ENCODE measurements at regions of chr10 and their contacts with region 1.

Region 1: GRCh38 chr10:97792141-97792721 is 20.4 kb upstream of the SFRP5 start:
- DNase-seq: peak; percentile 84
- H3K4me3 ChIP-seq: peak overlapping the region in 1 of 2 experiments; percentile 3; a peak in 1 of 4 replicates
- H3K27ac ChIP-seq: no peak overlapping the region
- H3K4me1 ChIP-seq: peaks cover 0 to 29% of the 10 kb centered on the region in 2 experiments; a peak in 1 of 4 replicates
- H3K27me3 ChIP-seq: no peaks in the 10 kb centered on the region
- CTCF ChIP-seq: peak; percentile 91
- EP300 ChIP-seq: no peak
- RAD21 ChIP-seq: peak; percentile 82

Region 2: DNA sequence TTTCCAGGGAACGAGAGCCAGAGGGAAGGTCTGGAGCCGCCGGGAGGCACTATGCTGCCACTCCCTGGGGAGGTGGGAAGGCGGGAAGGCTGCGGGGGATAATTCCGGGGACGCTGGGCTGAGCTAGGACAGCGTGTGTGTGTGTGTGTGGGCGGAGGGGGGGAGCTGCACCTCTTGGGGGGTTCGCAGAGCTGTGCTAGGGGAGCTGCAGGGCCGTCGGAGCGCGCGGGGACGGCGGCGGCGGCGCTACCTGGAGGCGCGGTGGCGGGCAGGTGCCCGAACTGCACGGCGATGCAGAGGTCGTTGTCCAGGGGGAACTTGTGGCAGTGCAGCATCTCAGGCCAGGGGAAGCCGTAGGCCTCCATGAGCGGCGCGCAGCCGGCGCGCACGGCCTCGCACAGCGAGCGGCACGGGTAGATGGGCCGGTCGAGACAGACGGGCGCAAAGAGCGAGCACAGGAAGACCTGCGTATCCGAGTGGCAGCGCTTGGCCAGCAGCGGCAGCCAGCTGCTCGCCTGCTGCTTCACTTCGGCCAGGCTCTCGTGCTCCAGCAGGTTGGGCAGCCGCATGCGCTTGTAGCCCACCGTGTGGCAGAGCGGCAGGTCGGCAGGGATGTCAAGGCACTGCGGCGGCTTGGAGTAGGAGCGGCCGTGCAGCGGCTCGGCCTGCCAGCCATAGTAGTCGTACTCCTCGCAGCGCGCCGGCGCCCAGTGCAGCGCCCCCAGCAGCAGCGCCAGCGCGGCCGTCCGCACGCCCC is 21.0 kb before region 1 on chr10:
- CTCF ChIA-PET with region 1: interaction called, 37 read pairs
- POLR2A ChIA-PET with region 1: no interaction called
- DNase-seq: peak; percentile 84
- H3K4me3 ChIP-seq: peak overlapping the region in 1 of 2 experiments; percentile 35; a peak in 2 of 4 replicates
- H3K27ac ChIP-seq: no peak overlapping the region
- H3K4me1 ChIP-seq: peaks cover 0 to 4% of the 10 kb centered on the region in 2 experiments; a peak in 1 of 4 replicates
- H3K27me3 ChIP-seq: peaks cover 21% of the 10 kb centered on the region; the same call in 1 of the 2 replicates
- CTCF ChIP-seq: no peak
- EP300 ChIP-seq: no peak
- RAD21 ChIP-seq: no peak

Region 3: GRCh38 chr10:97810446-97810845 is 18.2 kb after region 1 on chr10:
- CTCF ChIA-PET with region 1: interaction called, 31 read pairs
- POLR2A ChIA-PET with region 1: no interaction called
- DNase-seq: no peak
- H3K4me3 ChIP-seq: no peak overlapping the region
- H3K27ac ChIP-seq: no peak overlapping the region
- H3K4me1 ChIP-seq: no peaks in the 10 kb centered on the region
- H3K27me3 ChIP-seq: peaks cover 13% of the 10 kb centered on the region; the same call in 1 of the 2 replicates
- CTCF ChIP-seq: no peak
- EP300 ChIP-seq: no peak
- RAD21 ChIP-seq: no peak

Region 4: GRCh38 chr10:97849687-97850402 is 57.6 kb after region 1 on chr10 and contains the start of gene GOLGA7B:
- CTCF ChIA-PET with region 1: interaction called, 13 read pairs
- POLR2A ChIA-PET with region 1: interaction called, 5 read pairs
- DNase-seq: peak; percentile 92
- H3K4me3 ChIP-seq: peak within 1 kb of the TSS; percentile 23 to 37; a peak in 2 of 4 replicates
- H3K27ac ChIP-seq: peak within 1 kb of the TSS in 1 of 2 experiments; percentile 29; a peak in 1 of 4 replicates
- H3K4me1 ChIP-seq: peaks cover 0 to 17% of the 10 kb centered on the region in 2 experiments; a peak in 1 of 4 replicates
- H3K27me3 ChIP-seq: peaks cover 32% of the 10 kb centered on the region
- CTCF ChIP-seq: no peak
- EP300 ChIP-seq: no peak
- RAD21 ChIP-seq: no peak
- polyA plus RNA-seq, gene GOLGA7B: 0.03 and 0.13 TPM in 2 replicates

Region 5: GRCh38 chr10:97875391-97875790 is 83.2 kb after region 1 on chr10:
- CTCF ChIA-PET with region 1: interaction called, 277 read pairs
- POLR2A ChIA-PET with region 1: no interaction called
- DNase-seq: no peak
- H3K4me3 ChIP-seq: no peak overlapping the region
- H3K27ac ChIP-seq: no peak overlapping the region
- H3K4me1 ChIP-seq: peaks cover 0 to 11% of the 10 kb centered on the region in 2 experiments; a peak in 1 of 4 replicates
- H3K27me3 ChIP-seq: peaks cover 8% of the 10 kb centered on the region; the same call in 1 of the 2 replicates
- CTCF ChIP-seq: no peak
- EP300 ChIP-seq: no peak
- RAD21 ChIP-seq: no peak

Region 6: GRCh38 chr10:98361131-98362025 is 569.1 kb after region 1 on chr10:
- CTCF ChIA-PET with region 1: no interaction called
- POLR2A ChIA-PET with region 1: no interaction called
- DNase-seq: no peak
- H3K4me3 ChIP-seq: no peak overlapping the region
- H3K27ac ChIP-seq: no peak overlapping the region
- H3K4me1 ChIP-seq: peaks cover 0 to 3% of the 10 kb centered on the region in 2 experiments; a peak in 1 of 4 replicates
- H3K27me3 ChIP-seq: no peaks in the 10 kb centered on the region; the same call in 1 of the 2 replicates
- CTCF ChIP-seq: no peak
- EP300 ChIP-seq: no peak
- RAD21 ChIP-seq: no peak

Measured in SK-N-SH (cell line).